A549 (cell line): ENCODE measurements at regions of chr19 and their contacts with region 1.

Region 1: DNA sequence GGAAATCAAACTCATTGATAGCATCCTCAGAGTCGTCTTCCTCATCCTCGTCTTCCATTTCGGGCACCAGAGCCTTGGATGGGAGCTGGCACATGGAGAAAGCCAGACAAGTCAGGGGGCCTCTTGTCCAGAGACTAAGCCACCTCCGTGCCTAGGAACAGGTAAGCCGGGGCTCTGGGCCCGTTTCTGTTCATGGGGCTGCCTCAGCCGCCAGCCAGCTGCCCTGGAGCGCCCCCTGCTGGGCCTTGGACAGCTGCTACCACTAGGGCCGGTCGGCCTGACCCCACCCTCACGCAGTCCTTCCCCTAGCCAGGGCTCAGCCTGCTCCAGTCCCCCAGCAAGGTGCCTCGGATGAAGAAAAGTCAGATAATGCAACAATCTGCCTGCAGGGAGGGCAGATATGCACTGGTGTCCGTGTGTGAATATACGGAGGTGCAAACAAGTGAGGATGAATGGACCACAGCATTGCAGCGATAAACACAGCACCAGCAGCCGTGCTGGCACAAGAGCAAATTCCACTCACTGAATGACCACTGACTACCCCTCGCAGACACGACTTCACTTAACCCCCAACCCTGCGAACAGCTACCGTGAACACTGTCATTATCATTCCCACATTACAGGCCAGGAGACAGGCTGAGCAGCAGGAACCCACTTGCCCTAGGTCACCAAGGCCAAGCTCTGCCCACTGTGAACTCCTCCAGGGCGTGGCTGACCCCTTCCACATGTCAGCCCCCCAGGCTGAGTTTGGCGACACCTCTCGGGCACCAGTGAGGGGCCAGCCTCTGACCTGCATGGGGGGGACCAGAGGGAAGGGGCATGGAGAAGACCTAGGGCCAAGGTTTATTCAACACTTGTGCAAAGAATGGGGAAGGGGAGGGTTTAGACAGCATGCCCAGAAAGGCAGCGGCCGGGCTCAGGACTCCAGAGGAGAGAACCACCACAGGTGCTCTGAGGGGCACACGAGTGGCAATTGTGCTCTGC is 12.1 kb upstream of the PRKD2 start:
- DNase-seq: peak; percentile 72 to 92
- ATAC-seq: peak; percentile 61 to 89
- H3K4me3 ChIP-seq: no peak overlapping the region
- H3K27ac ChIP-seq: peak overlapping the region in 1 of 2 experiments; percentile 22; a peak in 1 of 6 replicates
- H3K4me1 ChIP-seq: peaks cover 40% of the 10 kb centered on the region
- CTCF ChIP-seq: peak; percentile 97
- EP300 ChIP-seq: no peak
- POLR2A ChIP-seq: no peak
- RAD21 ChIP-seq: peak; percentile 73 to 76

Region 2: DNA sequence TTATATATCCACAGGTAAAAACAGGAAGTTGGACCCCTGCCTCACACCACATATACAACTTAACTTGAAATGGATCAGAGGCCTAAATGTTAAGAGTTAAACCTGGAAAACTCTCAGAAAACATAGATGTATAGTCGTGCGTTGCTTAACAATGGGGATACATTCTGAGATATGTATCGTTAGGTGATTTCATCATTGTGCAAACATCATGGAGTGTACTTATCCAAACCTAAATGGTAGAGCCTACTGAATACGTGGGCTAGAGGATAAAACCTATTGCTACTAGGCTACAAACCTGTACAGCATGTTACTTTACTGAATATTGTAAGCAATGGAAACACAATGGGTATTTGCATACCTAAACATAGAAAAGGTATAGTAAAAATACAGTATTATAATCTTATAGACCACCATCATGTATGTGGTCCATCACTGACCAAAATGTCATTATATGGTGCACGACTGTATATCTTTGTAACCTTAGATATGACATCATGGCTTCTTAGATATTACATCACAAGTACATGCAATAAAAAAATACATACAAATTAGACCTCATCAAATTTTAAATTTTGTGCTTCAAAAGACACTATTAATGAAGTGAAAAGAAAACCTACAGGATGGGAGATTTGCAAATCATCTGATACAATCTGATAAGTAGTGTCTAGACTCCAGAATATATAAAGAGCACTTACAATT is 142.5 kb before region 1 on chr19:
- CTCF ChIA-PET with region 1: no interaction called
- POLR2A ChIA-PET with region 1: no interaction called
- DNase-seq: no peak
- ATAC-seq: no peak
- H3K4me3 ChIP-seq: no peak overlapping the region
- H3K27ac ChIP-seq: no peak overlapping the region
- H3K4me1 ChIP-seq: no peaks in the 10 kb centered on the region
- CTCF ChIP-seq: no peak
- EP300 ChIP-seq: no peak
- POLR2A ChIP-seq: no peak
- RAD21 ChIP-seq: no peak

Region 3: DNA sequence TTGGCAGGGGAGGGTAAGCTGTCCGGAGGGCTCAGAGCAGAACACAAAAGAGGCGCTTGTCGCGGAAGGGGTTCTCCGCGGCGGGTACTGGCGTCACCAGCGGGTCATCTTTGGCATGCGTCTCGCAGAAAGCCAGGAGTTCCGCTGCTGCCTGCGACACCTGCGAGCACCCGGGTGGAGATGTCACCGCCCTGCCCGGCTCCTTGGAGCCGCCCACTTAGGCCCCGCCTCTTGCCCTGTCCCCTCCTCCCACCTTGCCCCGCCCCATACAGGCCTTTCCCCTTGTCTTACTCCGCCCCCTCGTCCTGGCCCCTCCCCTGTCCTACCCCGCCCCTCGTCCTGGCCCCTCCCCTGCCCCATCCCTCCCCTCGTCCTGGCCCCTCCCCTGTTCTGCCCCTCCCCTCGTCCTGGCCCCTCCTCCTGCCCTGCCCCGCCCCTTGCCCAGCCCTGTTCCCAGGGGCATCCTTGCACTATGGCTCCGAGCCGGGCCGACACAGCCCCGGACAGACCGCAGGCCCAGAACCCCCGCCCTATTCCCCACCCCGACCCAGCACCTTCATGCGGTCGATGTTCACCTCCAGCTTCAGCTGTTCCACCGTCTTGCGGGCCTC is 94.8 kb before region 1 on chr19:
- CTCF ChIA-PET with region 1: interaction called, 11 read pairs
- POLR2A ChIA-PET with region 1: no interaction called
- DNase-seq: peak; percentile 96 to 97
- ATAC-seq: peak; percentile 31 to 75
- H3K4me3 ChIP-seq: peak overlapping the region; percentile 53
- H3K27ac ChIP-seq: peak overlapping the region; percentile 48 to 69; a peak in 5 of 6 replicates
- H3K4me1 ChIP-seq: peaks cover 21% of the 10 kb centered on the region
- CTCF ChIP-seq: no peak
- EP300 ChIP-seq: no peak
- POLR2A ChIP-seq: no peak
- RAD21 ChIP-seq: no peak

Region 4: GRCh38 chr19:46687438-46688145 is 41.4 kb before region 1 on chr19:
- CTCF ChIA-PET with region 1: interaction called, 10 read pairs
- POLR2A ChIA-PET with region 1: no interaction called
- DNase-seq: no peak
- ATAC-seq: no peak
- H3K4me3 ChIP-seq: no peak overlapping the region
- H3K27ac ChIP-seq: no peak overlapping the region
- H3K4me1 ChIP-seq: no peaks in the 10 kb centered on the region
- CTCF ChIP-seq: no peak
- EP300 ChIP-seq: no peak
- POLR2A ChIP-seq: no peak
- RAD21 ChIP-seq: no peak

Region 5: GRCh38 chr19:46704379-46705076 is 24.5 kb before region 1 on chr19:
- CTCF ChIA-PET with region 1: interaction called, 102 read pairs
- POLR2A ChIA-PET with region 1: no interaction called
- DNase-seq: peak; percentile 64 to 90
- ATAC-seq: peak; percentile 80 to 90
- H3K4me3 ChIP-seq: no peak overlapping the region
- H3K27ac ChIP-seq: no peak overlapping the region
- H3K4me1 ChIP-seq: no peaks in the 10 kb centered on the region
- CTCF ChIP-seq: peak; percentile 88
- EP300 ChIP-seq: no peak
- POLR2A ChIP-seq: no peak
- RAD21 ChIP-seq: peak; percentile 44 to 62

Region 6: GRCh38 chr19:46746281-46747013 is 17.5 kb after region 1 on chr19 and contains the start of gene STRN4:
- CTCF ChIA-PET with region 1: interaction called, 205 read pairs
- POLR2A ChIA-PET with region 1: interaction called, 4 read pairs
- DNase-seq: peak in 1 of 2 experiments; percentile 94
- ATAC-seq: peak; percentile 37 to 63
- H3K4me3 ChIP-seq: peak within 1 kb of the TSS; percentile 98
- H3K27ac ChIP-seq: peak within 1 kb of the TSS; percentile 99 to 100
- H3K4me1 ChIP-seq: peaks cover 17% of the 10 kb centered on the region
- CTCF ChIP-seq: no peak
- EP300 ChIP-seq: no peak
- POLR2A ChIP-seq: peak; percentile 51
- RAD21 ChIP-seq: no peak
- polyA plus RNA-seq, gene STRN4: 62.8 and 66.2 TPM in 2 replicates